Mammary epithelial cell (primary cell): ENCODE measurements at regions of chr1 and their contacts with region 1.

Region 1: DNA sequence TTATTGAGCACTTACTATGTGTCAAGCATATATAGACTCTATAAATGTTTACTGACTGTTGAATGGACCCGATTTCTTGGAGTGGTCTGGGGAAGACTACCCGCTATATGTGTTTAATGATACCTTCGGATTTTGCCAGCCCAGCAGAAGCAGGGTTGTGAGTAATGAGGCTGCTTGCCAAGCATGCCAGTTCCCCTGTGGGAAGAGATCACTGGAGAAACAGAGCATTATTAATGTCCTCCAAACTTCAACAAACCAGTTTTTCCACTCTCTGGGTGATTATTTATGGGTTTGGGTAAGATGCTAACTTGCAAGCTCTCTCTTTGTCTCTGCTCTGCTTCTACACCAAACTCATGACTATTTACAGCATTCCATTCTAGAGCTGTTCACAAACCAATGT is 25.1 kb upstream of the PHGDH start:
- DNase-seq: peak; percentile 92
- H3K4me3 ChIP-seq: peak overlapping the region in 1 of 3 experiments; percentile 9
- H3K27ac ChIP-seq: peak overlapping the region; percentile 19
- H3K4me1 ChIP-seq: peaks cover 32% of the 10 kb centered on the region
- H3K27me3 ChIP-seq: no peaks in the 10 kb centered on the region
- CTCF ChIP-seq: no peak

Region 2: GRCh38 chr1:119220991-119221390 is 465.7 kb before region 1 on chr1:
- CTCF ChIA-PET with region 1: no interaction called
- dilution Hi-C with region 1: no loop called
- in situ Hi-C with region 1: no loop called
- intact Hi-C with region 1: no loop called
- DNase-seq: peak; percentile 13
- H3K4me3 ChIP-seq: no peak overlapping the region
- H3K27ac ChIP-seq: no peak overlapping the region
- H3K4me1 ChIP-seq: no peaks in the 10 kb centered on the region
- H3K27me3 ChIP-seq: no peaks in the 10 kb centered on the region
- CTCF ChIP-seq: no peak

Region 3: GRCh38 chr1:119711804-119712341 is 25.2 kb after region 1 on chr1 and contains the start of gene PHGDH:
- CTCF ChIA-PET with region 1: no interaction called
- dilution Hi-C with region 1: no loop called
- in situ Hi-C with region 1: no loop called
- intact Hi-C with region 1: loop called (anchors 2 kb)
- DNase-seq: peak; percentile 88
- H3K4me3 ChIP-seq: peak within 1 kb of the TSS; percentile 56 to 75 (median 67)
- H3K27ac ChIP-seq: peak within 1 kb of the TSS; percentile 67
- H3K4me1 ChIP-seq: peaks cover 4% of the 10 kb centered on the region
- H3K27me3 ChIP-seq: no peaks in the 10 kb centered on the region
- CTCF ChIP-seq: no peak
- total RNA-seq, gene PHGDH: 171 to 211 TPM